ENCODE measurements at regions of chr15 and their contacts with region 1.

Region 1: DNA sequence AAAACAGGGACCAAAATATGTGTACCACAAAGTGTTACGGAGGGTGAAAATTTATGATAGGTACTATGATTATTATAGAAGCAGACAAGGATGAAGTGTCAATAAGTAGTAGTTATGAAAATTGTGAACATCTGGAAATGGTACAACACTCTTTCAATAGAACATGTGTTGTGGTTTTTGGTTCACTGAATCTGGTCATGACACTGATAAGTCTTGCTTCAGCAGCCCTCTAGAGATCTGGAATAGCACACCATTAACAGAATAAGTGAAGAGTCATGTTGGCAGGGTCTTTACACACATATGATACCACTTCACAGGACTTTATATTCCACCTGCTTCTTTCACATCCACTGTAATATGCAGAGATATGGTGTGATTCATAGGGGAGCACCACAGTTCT is 985.2 kb upstream of the SEMA6D start:
- DNase-seq: no peak
- H3K4me3 ChIP-seq: no peak overlapping the region
- CTCF ChIP-seq: no peak

Region 2: GRCh38 chr15:46660096-46660842 is 71.8 kb before region 1 on chr15:
- in situ Hi-C with region 1: loop called (anchors 5 kb)
- DNase-seq: no peak
- H3K4me3 ChIP-seq: no peak overlapping the region
- CTCF ChIP-seq: no peak

Measured in astrocyte of the cerebellum (primary cell).